Activated naive CD8-positive, alpha-beta T cell treated with anti-CD3 and anti-CD28 coated beads, Interleukin-2, amount 10 ng/mL, durations not matched to agents 7 days and 5 days (primary cell): ENCODE measurements at regions of chr5 and their contacts with region 1.

Region 1: DNA sequence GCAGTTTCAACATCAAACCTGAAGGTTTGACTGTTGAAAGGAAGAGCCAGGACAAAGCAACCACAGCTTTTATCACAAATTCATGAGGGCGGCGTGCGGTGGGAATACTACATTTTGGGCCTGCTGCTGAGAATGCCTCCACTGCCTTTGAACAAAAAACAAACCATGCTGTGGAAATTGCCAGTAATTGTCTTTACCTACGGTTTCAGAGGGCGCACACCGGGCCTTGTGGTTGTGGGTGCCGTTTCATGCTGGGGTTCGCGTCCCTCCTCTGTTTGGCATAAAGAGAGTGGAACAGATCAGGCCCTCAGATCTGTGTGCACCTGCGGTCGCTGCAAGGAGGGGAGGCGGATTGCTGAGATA is 27.6 kb upstream of the TCF7 start:
- DNase-seq: peak; percentile 76
- ATAC-seq: peak; percentile 64
- H3K4me3 Mint-ChIP-seq: peak overlapping the region; percentile 54
- H3K27ac Mint-ChIP-seq: peak overlapping the region; percentile 81
- H3K4me1 Mint-ChIP-seq: peaks cover 65% of the 10 kb centered on the region
- H3K27me3 Mint-ChIP-seq: no peaks in the 10 kb centered on the region

Region 2: GRCh38 chr5:134073404-134073803 is 13.5 kb before region 1 on chr5:
- POLR2A ChIA-PET with region 1: interaction called, 12 read pairs
- DNase-seq: no peak
- ATAC-seq: no peak
- H3K4me3 Mint-ChIP-seq: no peak overlapping the region
- H3K27ac Mint-ChIP-seq: no peak overlapping the region
- H3K4me1 Mint-ChIP-seq: peaks cover 38% of the 10 kb centered on the region
- H3K27me3 Mint-ChIP-seq: no peaks in the 10 kb centered on the region

Region 3: DNA sequence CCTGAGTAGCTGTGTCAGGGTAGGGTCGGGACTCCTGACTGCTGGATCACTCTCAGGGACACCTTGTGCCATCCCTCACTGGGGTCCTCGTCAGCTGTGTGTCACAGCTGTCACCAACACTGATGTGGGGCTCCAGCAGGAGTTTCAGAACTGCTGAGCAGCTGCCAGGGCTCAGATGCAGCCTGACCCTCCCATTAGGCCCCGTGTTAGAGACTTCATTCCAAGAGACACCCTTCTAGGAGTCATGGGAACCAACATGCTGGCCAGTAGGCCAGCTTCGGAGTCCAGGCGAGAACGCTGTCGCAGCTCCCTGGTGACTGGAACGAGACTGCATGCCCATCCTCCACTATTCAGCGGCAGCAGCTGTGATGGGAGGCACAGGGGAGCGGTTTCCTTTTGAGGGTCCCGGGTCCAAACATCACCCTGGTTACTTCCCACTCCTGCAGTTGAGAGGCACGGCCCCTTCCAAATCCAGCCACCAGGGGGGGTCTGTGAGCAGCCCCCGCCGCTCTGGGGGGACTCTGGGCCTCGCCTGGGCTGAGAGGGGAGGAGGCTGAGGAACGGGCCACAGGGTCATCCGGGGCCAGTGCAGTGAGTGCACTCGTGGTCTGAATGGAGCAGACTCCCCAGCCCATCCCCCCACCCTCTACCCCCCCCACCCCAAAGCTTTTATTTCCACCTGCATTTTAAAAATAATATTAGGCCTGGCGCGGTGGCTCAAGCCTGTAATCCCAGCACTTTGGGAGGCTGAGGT is 14.9 kb after region 1 on chr5:
- POLR2A ChIA-PET with region 1: interaction called, 27 read pairs
- DNase-seq: peak; percentile 88
- ATAC-seq: peak; percentile 43
- H3K4me3 Mint-ChIP-seq: no peak overlapping the region
- H3K27ac Mint-ChIP-seq: no peak overlapping the region
- H3K4me1 Mint-ChIP-seq: peaks cover 67% of the 10 kb centered on the region
- H3K27me3 Mint-ChIP-seq: no peaks in the 10 kb centered on the region